Psoas muscle (tissue), 8 donors: ENCODE measurements at regions of chr1 and their contacts with region 1.

Region 1: DNA sequence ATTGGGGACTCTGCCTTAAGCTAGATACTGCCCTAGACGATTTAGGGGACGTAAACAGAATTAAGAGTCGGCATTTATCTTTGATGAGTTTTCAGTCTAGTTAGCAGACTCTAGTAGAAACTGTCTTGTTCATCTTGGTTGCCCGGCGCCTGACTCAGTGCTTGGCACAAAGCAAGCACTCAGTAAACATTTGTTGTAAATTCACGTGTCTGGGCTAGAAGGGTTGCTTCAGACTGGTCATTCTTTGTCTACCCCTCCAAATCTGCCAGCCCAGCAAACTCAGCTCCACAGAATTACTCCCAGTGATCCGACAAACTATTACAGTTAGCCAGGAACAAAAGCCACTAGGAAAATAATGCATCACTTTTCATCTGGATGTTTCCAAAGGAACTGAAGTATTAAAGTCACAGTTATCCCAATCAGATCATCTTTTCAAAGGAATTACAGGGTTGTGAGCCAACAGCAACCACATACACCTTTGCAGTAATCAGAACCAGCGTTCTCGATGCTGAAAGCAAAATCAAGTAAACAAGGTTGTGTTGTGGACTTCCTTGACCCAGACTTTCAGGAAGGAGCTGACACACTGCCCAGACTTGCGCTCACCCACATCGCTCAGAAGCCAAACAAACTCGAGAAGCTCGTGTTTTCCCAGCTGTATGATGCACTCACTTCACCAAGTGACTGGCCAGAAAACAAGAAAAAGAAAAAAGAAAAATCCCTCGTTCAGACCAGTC is 66.5 kb upstream of the GADD45A start:
- DNase-seq: peak; percentile 62 to 63
- ATAC-seq: peak; percentile 79 to 87 (median 84)
- H3K4me3 ChIP-seq: peak overlapping the region; percentile 20
- H3K27ac ChIP-seq: peak overlapping the region; percentile 78
- H3K4me1 ChIP-seq: peaks cover 27% of the 10 kb centered on the region
- H3K27me3 ChIP-seq: no peaks in the 10 kb centered on the region
- CTCF ChIP-seq: no peak

Region 2: DNA sequence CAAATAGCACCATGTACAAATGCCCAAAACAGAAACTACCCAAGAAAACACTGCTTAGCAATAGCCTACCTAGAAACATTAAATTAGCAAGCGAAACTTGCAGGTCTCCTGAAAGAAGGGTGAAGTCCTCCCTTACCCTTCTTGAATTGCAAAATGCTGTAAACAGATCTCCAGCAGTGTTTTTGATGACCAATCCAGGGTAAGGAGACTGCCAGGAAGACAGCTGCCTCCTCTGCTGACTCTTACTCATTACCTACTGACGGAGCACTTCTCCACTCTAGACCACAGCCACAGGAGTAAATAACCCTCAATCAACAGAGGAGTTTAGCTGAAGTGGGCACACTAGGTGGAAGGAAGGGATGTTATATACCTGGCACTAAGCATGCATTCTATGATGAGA is 34.3 kb after region 1 on chr1:
- intact Hi-C with region 1: loop called in 1 of 2 experiments (anchors 2 kb)
- DNase-seq: peak; percentile 30 to 59
- ATAC-seq: peak; percentile 98 to 99 (median 99)
- H3K4me3 ChIP-seq: peak overlapping the region; percentile 57
- H3K27ac ChIP-seq: peak overlapping the region; percentile 88
- H3K4me1 ChIP-seq: peaks cover 14% of the 10 kb centered on the region
- H3K27me3 ChIP-seq: no peaks in the 10 kb centered on the region
- CTCF ChIP-seq: no peak

Region 3: DNA sequence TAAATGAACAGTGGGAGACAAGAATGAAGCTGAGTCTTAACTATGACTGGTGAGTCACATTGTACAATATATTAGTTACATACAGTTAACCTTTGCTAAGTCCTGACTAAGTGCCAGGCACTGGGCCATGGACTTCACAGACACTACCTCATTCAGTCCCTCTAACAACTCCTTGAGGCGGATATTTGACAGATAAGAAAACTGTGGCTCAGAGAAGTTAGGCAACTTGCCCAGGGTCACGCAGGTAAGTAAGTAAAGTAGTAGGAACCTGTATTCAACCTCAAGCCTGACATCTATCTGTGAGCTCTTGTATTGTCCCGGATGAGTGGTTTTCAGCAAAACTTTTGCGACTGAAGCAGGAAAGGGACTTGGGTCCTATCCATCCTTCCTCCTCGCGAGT is 152.7 kb after region 1 on chr1:
- intact Hi-C with region 1: no loop called
- DNase-seq: no peak
- ATAC-seq: peak in 1 of 4 donors; percentile 39
- H3K4me3 ChIP-seq: no peak overlapping the region
- H3K27ac ChIP-seq: no peak overlapping the region
- H3K4me1 ChIP-seq: no peaks in the 10 kb centered on the region
- H3K27me3 ChIP-seq: no peaks in the 10 kb centered on the region
- CTCF ChIP-seq: no peak